ENCODE measurements at regions of chr18 and their contacts with region 1.

Region 1: GRCh38 chr18:36757081-36757480 is 71.7 kb downstream of the TPGS2 start:
- DNase-seq: peak; percentile 53
- ATAC-seq: peak; percentile 56
- H3K4me3 ChIP-seq: no peak overlapping the region
- H3K27ac ChIP-seq: no peak overlapping the region
- H3K4me1 ChIP-seq: no peaks in the 10 kb centered on the region
- H3K27me3 ChIP-seq: no peaks in the 10 kb centered on the region
- CTCF ChIP-seq: peak; percentile 57

Region 2: GRCh38 chr18:36688020-36688965 is 68.8 kb before region 1 on chr18:
- CTCF ChIA-PET with region 1: no interaction called
- POLR2A ChIA-PET with region 1: no interaction called
- intact Hi-C with region 1: loop called (anchors 1 kb)
- DNase-seq: peak; percentile 66
- ATAC-seq: no peak
- H3K4me3 ChIP-seq: no peak overlapping the region
- H3K27ac ChIP-seq: no peak overlapping the region
- H3K4me1 ChIP-seq: no peaks in the 10 kb centered on the region
- H3K27me3 ChIP-seq: no peaks in the 10 kb centered on the region
- CTCF ChIP-seq: peak; percentile 69

Region 3: GRCh38 chr18:36744261-36744876 is 12.7 kb before region 1 on chr18:
- CTCF ChIA-PET with region 1: no interaction called
- POLR2A ChIA-PET with region 1: no interaction called
- intact Hi-C with region 1: no loop called
- DNase-seq: no peak
- ATAC-seq: no peak
- H3K4me3 ChIP-seq: no peak overlapping the region
- H3K27ac ChIP-seq: no peak overlapping the region
- H3K4me1 ChIP-seq: no peaks in the 10 kb centered on the region
- H3K27me3 ChIP-seq: no peaks in the 10 kb centered on the region
- CTCF ChIP-seq: no peak

Region 4: DNA sequence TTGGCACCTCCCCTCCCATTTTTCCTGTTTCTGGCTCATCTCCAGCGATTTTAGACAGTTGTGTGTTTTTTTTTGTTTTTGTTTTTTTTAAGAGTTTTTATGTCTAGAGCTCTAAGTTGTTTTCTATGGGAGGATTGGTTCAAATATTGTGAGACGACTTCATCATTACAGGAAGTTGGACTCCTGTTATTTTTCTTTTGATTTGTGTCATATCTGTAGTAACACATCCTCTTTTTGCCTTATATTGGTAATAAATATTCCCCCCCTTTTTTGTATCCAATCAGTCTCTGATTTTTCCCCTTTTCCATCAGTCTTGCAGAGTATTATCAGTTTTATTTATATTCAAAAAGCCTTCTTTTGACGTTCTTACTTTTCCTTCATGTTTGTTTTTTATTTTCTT is 160.8 kb after region 1 on chr18:
- CTCF ChIA-PET with region 1: no interaction called
- POLR2A ChIA-PET with region 1: no interaction called
- intact Hi-C with region 1: no loop called
- DNase-seq: no peak
- ATAC-seq: no peak
- H3K4me3 ChIP-seq: no peak overlapping the region
- H3K27ac ChIP-seq: no peak overlapping the region
- H3K4me1 ChIP-seq: no peaks in the 10 kb centered on the region
- H3K27me3 ChIP-seq: no peaks in the 10 kb centered on the region
- CTCF ChIP-seq: no peak

Measured in PC-3 (cell line).